Aorta (tissue), 5 donors: ENCODE measurements at regions of chr7 and their contacts with region 1.

Region 1: DNA sequence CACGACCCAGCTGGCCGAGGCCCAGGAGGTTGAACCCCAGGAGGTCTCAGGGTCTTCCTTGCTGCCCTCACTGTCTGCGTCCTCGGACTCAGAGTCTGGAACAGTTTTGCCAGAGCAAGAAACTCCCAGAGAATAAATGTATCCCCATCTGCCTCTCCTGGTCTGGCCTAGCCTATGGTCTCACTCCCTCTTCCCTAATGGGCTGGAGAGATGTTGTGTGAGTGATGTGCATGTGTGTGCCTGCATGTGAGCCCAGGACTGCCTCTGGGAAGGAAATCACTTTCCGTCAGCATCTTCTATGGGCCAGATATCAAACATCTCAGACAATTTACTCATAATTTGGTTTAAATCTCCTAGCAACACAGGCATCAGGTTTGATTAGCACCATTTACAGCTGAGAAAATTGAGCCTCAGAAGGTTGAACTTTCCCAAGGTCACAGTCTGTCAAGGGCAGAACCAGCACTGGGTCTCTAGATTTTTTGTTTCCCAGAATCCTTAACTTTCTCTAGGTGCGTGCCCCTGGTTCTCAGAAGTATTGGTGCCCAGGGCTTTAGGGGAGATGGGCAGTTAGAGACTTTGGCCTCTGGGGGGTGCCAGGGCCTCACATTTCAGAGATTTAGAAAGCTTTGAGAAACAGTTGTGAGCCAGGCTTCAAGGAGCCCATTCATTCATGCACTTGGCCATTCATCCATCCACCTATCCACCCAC is 4.9 kb downstream of the TMEM270 start:
- DNase-seq: no peak
- ATAC-seq: peak; percentile 72
- H3K4me3 ChIP-seq: no peak overlapping the region
- H3K27ac ChIP-seq: no peak overlapping the region
- H3K4me1 ChIP-seq: no peaks in the 10 kb centered on the region
- H3K27me3 ChIP-seq: no peaks in the 10 kb centered on the region

Region 2: GRCh38 chr7:73828107-73828803 is 37.6 kb before region 1 on chr7:
- intact Hi-C with region 1: no loop called
- DNase-seq: no peak
- ATAC-seq: no peak
- H3K4me3 ChIP-seq: no peak overlapping the region
- H3K27ac ChIP-seq: no peak overlapping the region
- H3K4me1 ChIP-seq: no peaks in the 10 kb centered on the region
- H3K27me3 ChIP-seq: peaks cover 0 to 2% of the 10 kb centered on the region in 2 donors

Region 3: GRCh38 chr7:73971704-73972341 is 105.9 kb after region 1 on chr7:
- intact Hi-C with region 1: loop called in 1 of 2 experiments (anchors 5 kb)
- DNase-seq: peak in 1 of 2 donors; percentile 47
- ATAC-seq: no peak
- H3K4me3 ChIP-seq: no peak overlapping the region
- H3K27ac ChIP-seq: no peak overlapping the region
- H3K4me1 ChIP-seq: no peaks in the 10 kb centered on the region
- H3K27me3 ChIP-seq: no peaks in the 10 kb centered on the region

Region 4: DNA sequence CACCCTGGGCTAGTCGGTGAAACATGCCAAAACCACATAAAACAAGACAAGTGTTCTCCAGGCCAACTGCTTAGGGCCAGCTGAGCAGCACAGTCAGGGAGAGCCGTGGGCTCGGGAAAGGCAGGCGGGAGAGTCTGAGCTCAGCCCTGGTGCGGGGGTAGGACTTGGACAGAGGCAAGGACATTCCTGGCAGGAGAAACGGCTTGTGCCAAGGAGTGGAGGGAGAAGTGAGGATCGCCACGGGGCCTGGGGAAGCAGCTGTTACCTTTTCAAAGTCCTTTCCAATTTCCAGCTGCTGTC is 166.2 kb after region 1 on chr7:
- intact Hi-C with region 1: loop called in 1 of 2 experiments (anchors 5 kb)
- DNase-seq: peak; percentile 85 to 87
- ATAC-seq: no peak
- H3K4me3 ChIP-seq: peak overlapping the region; percentile 36 to 76
- H3K27ac ChIP-seq: peak overlapping the region; percentile 77 to 94
- H3K4me1 ChIP-seq: no peaks in the 10 kb centered on the region
- H3K27me3 ChIP-seq: no peaks in the 10 kb centered on the region

Region 5: DNA sequence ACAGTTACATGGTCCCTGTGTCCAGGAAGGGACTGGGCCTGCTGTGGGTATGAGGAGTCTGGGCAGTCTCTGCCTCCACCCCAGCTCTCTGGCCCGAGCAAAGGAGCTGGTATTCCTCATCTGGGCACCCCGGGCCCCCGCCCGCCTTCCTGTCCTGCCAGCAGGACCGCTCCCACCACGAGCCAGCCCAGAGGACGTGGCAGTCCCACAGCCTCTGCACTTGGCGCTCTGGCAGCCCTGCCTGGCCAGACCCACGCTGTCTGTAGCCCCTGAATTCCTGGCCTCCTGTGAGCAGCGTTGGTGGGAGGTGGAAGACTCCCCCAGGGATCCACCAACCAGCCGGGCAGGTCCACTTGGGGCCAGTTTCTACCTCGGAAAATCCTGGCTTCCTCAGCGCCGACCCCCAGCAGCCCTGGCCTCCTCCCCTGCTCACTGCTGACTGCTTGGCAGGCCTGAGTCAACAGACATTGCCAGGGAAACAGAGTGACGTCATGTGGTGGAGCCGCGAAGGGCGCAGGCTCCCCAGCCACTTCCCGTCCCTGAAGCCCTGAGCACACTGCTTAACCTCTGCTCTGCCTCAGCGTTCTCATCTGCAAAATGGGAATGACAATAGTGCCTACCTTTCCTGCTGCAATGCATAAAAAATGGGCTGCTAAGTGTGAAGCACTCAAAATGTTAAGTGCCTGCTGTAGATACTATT is 196.1 kb after region 1 on chr7:
- intact Hi-C with region 1: loop called in 1 of 2 experiments (anchors 5 kb)
- DNase-seq: peak; percentile 94 to 95
- ATAC-seq: peak; percentile 92
- H3K4me3 ChIP-seq: no peak overlapping the region
- H3K27ac ChIP-seq: peak overlapping the region in 1 of 2 donors; percentile 88
- H3K4me1 ChIP-seq: no peaks in the 10 kb centered on the region
- H3K27me3 ChIP-seq: no peaks in the 10 kb centered on the region

Region 6: GRCh38 chr7:74173866-74174605 is 308.1 kb after region 1 on chr7 and contains the start of gene EIF4H:
- intact Hi-C with region 1: loop called in 1 of 2 experiments (anchors 2 kb)
- DNase-seq: peak; percentile 97 to 99
- ATAC-seq: peak; percentile 96
- H3K4me3 ChIP-seq: peak within 1 kb of the TSS; percentile 84 to 88
- H3K27ac ChIP-seq: peak within 1 kb of the TSS; percentile 19 to 62
- H3K4me1 ChIP-seq: peaks cover 0 to 3% of the 10 kb centered on the region in 2 donors
- H3K27me3 ChIP-seq: no peaks in the 10 kb centered on the region
- total RNA-seq, gene EIF4H: 190 to 207 TPM

Region 7: DNA sequence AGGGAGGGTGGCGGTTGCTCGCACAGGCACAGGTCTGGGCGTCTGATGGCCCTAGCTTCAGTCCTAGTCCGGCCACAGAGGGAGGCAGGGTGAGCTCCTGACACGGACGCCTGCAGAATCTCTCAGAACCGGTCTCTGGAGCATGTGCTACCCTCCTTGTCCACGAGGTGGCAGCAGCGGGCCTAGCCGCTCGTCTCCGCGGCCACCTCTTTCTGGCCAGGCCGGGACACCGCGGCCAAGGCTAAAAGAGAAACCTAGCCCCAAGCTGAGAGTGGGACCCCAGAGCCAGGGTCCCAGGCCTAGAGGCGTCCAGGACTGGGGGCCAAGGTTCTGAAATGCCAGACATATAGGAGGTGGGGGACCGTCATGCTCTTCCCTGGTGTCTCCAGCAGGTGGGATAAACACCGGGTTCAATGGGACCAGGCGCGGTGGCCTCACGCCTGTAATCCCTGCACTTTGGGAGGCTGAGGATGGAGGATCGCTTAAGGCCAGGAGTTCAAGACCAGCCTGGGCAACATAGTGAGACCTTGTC is 340.8 kb after region 1 on chr7:
- intact Hi-C with region 1: loop called (anchors 1 to 5 kb)
- DNase-seq: peak; percentile 93 to 97
- ATAC-seq: peak; percentile 92
- H3K4me3 ChIP-seq: no peak overlapping the region
- H3K27ac ChIP-seq: no peak overlapping the region
- H3K4me1 ChIP-seq: no peaks in the 10 kb centered on the region
- H3K27me3 ChIP-seq: no peaks in the 10 kb centered on the region

Region 8: GRCh38 chr7:74401137-74401859 is 535.4 kb after region 1 on chr7:
- intact Hi-C with region 1: loop called in 1 of 2 experiments (anchors 5 kb)
- DNase-seq: peak; percentile 74 to 89
- ATAC-seq: peak; percentile 73
- H3K4me3 ChIP-seq: no peak overlapping the region
- H3K27ac ChIP-seq: no peak overlapping the region
- H3K4me1 ChIP-seq: no peaks in the 10 kb centered on the region
- H3K27me3 ChIP-seq: no peaks in the 10 kb centered on the region